ENCODE measurements at regions of chr5 and their contacts with region 1.

Region 1: GRCh38 chr5:150560401-150561193 is 52.7 kb downstream of the NDST1 start:
- DNase-seq: peak; percentile 66 to 86 (median 78)
- H3K4me3 ChIP-seq: no peak overlapping the region
- H3K4me3 Mint-ChIP-seq: no peak overlapping the region
- H3K27ac ChIP-seq: no peak overlapping the region
- H3K27ac Mint-ChIP-seq: no peak overlapping the region
- H3K4me1 ChIP-seq: no peaks in the 10 kb centered on the region
- H3K4me1 Mint-ChIP-seq: no peaks in the 10 kb centered on the region
- H3K27me3 ChIP-seq: no peaks in the 10 kb centered on the region
- H3K27me3 Mint-ChIP-seq: peaks cover 0 to 5% (median 4%) of the 10 kb centered on the region in 3 donors
- CTCF ChIP-seq: peak; percentile 85

Region 2: DNA sequence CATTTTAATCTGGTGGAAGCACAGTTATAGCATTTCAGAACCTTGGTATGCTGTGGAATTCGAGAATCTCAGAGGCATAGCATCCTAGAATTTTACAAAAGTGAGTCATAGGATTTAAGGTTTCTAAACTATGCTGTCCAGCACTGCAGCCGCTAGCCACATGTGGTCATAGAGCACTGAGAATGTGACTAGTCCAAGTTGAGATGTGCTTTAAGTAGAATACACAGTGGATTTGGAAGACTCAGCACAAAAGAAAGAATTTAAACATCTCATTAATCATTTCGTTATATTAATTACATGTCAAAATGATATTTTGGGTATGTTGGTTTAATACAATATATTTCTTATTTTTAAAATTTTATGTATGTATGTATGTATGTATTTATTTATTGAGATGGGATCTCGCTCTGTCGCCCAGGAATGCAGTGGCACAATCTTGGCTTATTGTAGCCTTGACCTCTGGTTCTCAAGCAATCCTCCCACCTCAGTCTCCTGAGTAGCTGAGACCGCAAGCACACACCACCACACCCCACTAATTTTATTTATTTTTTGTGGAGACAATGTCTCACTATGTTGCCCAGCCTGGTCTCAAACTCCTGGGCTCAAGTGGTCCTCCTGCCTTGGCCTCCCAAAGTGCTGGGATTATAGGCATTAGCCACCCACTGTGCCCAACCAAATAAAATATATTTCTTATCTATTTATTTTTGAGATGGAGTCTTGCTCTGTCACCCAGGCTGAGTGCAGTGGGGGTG is 90.7 kb before region 1 on chr5:
- intact Hi-C with region 1: no loop called
- DNase-seq: no peak
- H3K4me3 ChIP-seq: no peak overlapping the region
- H3K4me3 Mint-ChIP-seq: no peak overlapping the region
- H3K27ac ChIP-seq: no peak overlapping the region
- H3K27ac Mint-ChIP-seq: peak overlapping the region in 1 of 7 donors; percentile 63
- H3K4me1 ChIP-seq: peaks cover 8 to 9% of the 10 kb centered on the region in 2 donors
- H3K4me1 Mint-ChIP-seq: peaks cover 27% of the 10 kb centered on the region
- H3K27me3 ChIP-seq: no peaks in the 10 kb centered on the region
- H3K27me3 Mint-ChIP-seq: peaks cover 0 to 11% (median 3%) of the 10 kb centered on the region in 3 donors
- CTCF ChIP-seq: no peak

Region 3: DNA sequence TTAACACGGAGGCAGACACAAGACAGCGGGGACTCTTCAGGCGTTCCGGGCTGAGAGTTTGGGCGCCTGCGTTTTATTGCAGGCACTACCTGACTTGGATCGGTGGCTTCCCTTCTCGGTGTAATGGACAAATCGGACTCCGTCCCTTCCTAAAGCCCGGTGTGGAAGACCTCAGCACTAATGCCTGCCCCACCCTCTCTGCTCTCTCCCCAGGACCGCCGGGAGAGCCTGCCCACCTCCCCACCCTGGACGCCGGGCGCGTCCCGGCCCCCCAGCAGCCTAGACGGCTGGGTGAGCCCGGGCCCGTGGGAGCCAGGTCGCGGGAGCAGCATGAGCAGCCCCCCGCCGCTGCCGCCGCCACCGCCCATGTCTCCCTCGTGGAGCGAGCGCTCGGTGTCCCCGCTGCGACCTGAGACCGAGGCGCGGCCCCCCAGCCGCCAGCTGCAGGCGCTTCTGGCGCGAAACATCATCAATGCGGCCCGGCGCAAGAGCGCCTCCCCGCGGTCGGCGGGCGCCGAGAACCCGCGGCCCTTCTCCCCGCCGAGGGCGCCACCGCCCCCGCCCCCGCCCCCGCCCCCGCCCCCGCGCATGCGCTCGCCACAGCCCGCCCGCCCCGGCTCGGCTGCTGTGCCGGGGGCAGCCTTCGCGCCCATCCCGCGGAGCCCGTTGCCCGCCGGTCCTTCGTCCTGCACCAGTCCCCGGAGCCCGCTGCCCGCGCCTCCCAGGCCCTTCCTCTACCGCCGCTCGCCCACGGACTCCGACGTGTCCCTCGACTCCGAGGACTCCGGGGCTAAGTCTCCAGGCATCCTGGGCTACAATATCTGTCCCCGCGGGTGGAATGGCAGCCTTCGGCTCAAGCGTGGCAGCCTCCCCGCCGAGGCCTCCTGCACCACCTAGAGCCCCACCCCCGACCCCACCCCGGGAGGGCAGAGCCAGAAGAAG is 95.9 kb after region 1 on chr5:
- intact Hi-C with region 1: loop called (anchors 5 kb)
- DNase-seq: peak; percentile 51 to 60 (median 56)
- H3K4me3 ChIP-seq: peak overlapping the region; percentile 43 to 79 (median 53)
- H3K4me3 Mint-ChIP-seq: peak overlapping the region; percentile 74 to 83
- H3K27ac ChIP-seq: no peak overlapping the region
- H3K27ac Mint-ChIP-seq: no peak overlapping the region
- H3K4me1 ChIP-seq: peaks cover 9 to 14% of the 10 kb centered on the region in 2 donors
- H3K4me1 Mint-ChIP-seq: peaks cover 9% of the 10 kb centered on the region
- H3K27me3 ChIP-seq: peaks cover 0 to 4% of the 10 kb centered on the region in 2 donors
- H3K27me3 Mint-ChIP-seq: peaks cover 6 to 15% (median 11%) of the 10 kb centered on the region in 3 donors
- CTCF ChIP-seq: peak; percentile 77

Measured in CD14-positive monocyte (primary cell).